HEK293 (cell line): ENCODE measurements at regions of chr10 and their contacts with region 1.

Region 1: DNA sequence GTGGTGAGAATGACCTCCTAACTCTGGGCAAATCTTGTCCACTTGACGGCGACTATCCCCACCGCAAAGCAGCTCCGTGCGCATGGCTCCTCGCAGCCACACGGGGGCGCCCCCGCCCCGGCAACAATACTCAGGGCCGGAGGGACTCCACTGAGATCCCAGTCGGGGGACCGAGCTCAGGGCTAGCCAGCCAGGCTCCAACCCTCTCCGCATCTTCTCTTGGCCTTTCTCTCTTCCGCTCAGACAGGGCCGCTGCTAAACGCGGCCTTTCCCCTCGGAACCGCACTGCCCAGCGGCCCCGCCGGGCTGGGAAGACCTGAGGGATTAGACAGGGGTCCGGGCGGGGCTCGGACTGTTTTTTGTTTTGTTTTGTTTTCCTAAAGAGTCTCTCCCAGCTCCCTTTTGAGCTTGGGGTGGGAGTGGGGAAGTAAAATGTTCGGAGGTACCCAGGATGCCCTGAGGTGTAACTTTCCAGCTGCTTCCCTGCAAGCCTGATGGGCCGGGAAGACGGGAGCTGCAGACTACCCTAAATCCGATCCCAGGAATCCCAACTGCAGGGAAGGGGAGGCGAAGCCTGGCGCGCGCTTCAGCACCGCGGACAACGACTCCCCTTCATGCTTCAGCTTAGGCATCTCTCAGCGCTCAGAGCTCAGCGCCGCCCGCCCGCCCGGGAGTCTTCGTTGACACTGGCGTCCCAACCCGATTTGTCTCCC is 2.7 kb downstream of the KCNIP2 start:
- H3K4me3 ChIP-seq: peak overlapping the region; percentile 2
- H3K27ac ChIP-seq: no peak overlapping the region
- H3K4me1 ChIP-seq: peaks cover 6% of the 10 kb centered on the region
- CTCF ChIP-seq: peak; percentile 96

Region 2: DNA sequence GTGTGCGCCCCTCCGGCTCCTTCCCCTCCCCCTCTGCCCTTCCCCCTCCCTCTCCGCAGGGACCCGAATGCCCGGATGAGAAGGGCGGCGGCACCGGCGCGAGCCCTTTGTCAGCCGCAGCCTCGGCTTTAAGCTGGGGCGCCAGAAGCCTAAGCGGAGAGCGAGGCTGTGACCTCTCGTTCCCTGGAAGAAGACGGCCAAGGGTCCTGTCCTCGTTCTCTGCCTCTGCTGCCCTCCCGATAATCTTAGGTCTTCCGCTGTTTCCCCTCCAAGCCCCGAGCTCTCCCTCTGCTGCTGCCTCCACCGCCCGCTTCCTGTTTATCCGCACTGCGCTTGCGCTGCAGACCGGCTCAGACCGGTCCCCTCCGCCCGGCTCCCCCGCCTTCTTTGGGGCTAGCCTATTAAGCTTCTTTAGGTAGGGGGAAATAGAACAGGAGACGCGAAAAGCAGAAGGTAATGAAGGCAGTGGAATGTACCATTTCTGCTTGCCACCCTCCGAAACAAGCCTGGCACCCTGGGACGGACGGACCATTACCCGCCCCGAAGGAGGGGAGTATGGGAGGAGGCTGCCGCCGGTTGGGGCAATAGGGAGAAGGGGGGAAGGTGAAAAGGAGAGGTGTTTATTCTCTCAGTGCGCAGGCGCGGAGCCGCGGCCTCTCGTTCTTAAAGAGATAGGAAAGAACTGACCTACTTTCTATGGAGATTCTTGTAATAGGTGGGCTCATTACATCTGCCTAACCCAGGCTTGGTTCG is 22.6 kb before region 1 on chr10 and contains the start of gene OGA:
- CTCF ChIA-PET with region 1: interaction called, 17 read pairs
- POLR2A ChIA-PET with region 1: interaction called, 24 read pairs
- H3K4me3 ChIP-seq: peak within 1 kb of the TSS; percentile 92
- H3K27ac ChIP-seq: peak within 1 kb of the TSS; percentile 90
- H3K4me1 ChIP-seq: peaks cover 9% of the 10 kb centered on the region; the same call in 1 of the 2 replicates
- CTCF ChIP-seq: no peak

Region 3: GRCh38 chr10:101867931-101868330 is 27.0 kb after region 1 on chr10:
- CTCF ChIA-PET with region 1: interaction called, 11 read pairs
- POLR2A ChIA-PET with region 1: no interaction called
- H3K4me3 ChIP-seq: no peak overlapping the region
- H3K27ac ChIP-seq: no peak overlapping the region
- H3K4me1 ChIP-seq: no peaks in the 10 kb centered on the region
- CTCF ChIP-seq: no peak

Region 4: GRCh38 chr10:101889256-101890210 is 48.6 kb after region 1 on chr10:
- CTCF ChIA-PET with region 1: interaction called, 59 read pairs
- POLR2A ChIA-PET with region 1: interaction called, 3 read pairs
- H3K4me3 ChIP-seq: no peak overlapping the region
- H3K27ac ChIP-seq: no peak overlapping the region
- H3K4me1 ChIP-seq: peaks cover 9% of the 10 kb centered on the region; the same call in 1 of the 2 replicates
- CTCF ChIP-seq: peak; percentile 56; the same call in 1 of the 2 replicates

Region 5: GRCh38 chr10:101995451-101996063 is 154.7 kb after region 1 on chr10:
- CTCF ChIA-PET with region 1: interaction called, 28 read pairs
- POLR2A ChIA-PET with region 1: no interaction called
- H3K4me3 ChIP-seq: no peak overlapping the region
- H3K27ac ChIP-seq: no peak overlapping the region
- H3K4me1 ChIP-seq: peaks cover 7% of the 10 kb centered on the region
- CTCF ChIP-seq: no peak

Region 6: DNA sequence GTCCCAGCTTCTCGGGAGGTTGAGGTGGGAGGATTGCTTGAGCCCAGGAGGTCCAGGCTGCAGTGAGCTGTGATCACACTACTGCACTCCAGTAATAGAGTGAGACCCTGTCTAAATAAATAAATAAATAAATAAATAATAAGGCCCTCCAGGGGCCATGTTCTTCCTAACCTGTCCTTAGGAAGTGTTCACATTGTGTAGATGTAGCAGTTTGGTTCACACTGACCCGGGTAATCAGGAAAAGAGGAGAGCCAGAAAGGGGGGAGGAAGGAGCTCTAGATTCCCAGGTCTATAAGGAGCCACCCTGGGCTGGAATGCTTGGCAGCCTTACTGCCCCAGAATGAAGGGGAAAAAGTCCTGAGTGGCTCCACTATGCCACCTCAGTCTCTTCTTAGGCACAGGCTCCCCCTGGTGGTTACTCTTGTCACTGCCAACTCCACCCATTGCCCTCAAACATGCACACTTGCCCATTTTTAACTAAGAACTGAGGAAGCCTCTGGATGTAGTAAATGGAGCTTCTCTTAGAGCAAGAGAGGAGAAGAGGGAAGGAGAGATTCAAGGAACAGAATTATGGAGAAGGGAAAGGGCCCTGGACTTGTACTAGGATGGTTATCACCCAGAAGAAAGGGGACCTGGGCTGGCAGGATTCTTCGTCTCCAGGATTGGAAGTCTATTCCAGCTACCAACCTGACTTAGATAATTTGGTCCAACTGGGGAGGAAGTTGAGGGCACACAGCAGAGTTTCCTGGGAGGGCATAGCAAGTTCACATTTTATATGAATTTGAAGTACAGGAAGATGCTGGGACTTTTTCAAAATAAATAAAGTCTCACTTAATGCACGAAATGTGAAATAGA is 232.0 kb after region 1 on chr10:
- CTCF ChIA-PET with region 1: interaction called, 55 read pairs
- POLR2A ChIA-PET with region 1: interaction called, 4 read pairs
- H3K4me3 ChIP-seq: no peak overlapping the region
- H3K27ac ChIP-seq: no peak overlapping the region
- H3K4me1 ChIP-seq: peaks cover 6% of the 10 kb centered on the region
- CTCF ChIP-seq: peak; percentile 85